ENCODE measurements at regions of chr10 and their contacts with region 1.

Region 1: DNA sequence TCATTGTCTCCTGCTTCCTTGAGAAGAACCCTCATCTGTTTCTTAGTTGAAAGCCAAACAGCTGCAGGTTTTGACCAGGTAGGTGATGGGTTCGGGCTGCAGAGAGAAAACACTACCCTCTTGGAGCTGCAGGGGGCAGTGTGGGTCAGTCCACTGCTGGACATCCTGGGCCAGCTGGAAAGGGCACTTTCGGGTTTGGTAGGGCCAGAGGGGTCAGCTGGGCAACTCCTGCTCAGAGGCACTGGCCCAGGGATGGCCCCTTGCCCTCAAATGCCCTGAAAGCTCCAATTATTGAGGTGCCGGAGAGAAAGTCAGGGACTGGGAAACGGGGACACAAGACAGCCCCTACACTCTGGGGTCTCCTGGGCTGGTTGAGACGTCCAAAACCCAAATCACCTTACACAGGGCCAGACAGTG is 90.7 kb downstream of the MKI67 start:
- DNase-seq: peak; percentile 69

Region 2: DNA sequence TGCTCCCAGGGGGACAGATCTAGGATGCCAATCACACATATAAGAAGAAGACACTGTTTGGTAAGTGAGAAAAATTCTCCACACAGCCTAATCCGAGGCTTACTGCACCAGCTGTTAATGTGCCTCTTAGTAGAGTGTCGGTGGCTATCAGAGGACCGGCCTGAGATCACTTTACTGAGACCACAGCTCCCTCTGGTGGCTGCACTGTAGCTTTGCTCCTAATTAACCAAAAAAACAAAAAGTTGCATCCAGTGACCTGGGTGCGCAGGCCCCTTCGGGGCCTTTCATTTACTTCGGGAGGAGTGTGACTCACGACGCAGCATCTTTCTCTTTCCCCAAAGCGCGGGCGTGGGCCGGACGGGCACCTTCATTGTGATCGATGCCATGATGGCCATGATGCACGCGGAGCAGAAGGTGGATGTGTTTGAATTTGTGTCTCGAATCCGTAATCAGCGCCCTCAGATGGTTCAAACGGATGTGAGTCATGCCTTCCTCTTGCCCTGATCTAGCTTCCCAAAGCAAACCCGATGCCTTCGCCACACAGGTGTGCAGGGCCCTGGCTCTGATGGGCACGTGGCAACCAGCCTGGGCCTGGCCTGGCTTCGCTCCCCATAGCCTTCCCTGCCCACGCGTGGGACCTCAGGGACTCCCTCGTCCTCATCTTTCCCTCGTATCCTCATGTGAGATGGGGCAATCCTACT is 33.9 kb after region 1 on chr10:
- CTCF ChIA-PET with region 1: interaction called, 12 read pairs
- POLR2A ChIA-PET with region 1: no interaction called
- DNase-seq: peak; percentile 82

Region 3: GRCh38 chr10:128161031-128161430 is 125.5 kb after region 1 on chr10:
- CTCF ChIA-PET with region 1: no interaction called
- POLR2A ChIA-PET with region 1: no interaction called
- DNase-seq: no peak